H1 (cell line): ENCODE measurements at regions of chr6 and their contacts with region 1.

Region 1: DNA sequence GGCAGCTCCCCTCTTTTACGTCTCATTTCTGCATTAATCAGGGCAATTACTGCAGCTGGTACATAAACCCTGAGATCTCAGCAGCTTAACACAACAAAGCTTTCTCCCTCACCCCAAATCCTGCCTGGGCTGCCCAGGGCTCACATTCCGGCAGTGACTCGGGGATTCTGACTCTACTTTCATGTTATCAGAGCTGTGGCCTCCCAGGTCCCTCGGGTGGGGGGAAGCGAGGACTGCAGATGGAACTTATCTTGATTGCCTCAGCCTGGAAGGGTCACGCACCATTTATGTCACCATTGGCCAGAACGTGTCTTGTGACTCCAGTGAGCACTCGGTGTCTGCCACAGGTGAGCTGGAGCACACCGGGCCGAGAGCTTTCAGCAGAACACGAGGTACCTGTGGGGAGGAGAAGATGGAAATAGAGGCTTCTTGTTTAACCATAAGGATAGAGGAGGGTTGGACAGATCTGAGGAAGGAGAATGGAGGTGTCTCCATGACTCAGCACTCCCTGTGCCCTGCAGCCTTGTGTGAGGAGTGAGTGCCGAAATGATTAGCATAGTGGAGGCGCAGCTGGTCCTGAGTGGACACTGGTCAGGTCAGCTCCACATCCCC is 88.5 kb upstream of the EXOC2 start:
- DNase-seq: no peak
- H3K4me3 ChIP-seq: no peak overlapping the region
- H3K27ac ChIP-seq: no peak overlapping the region
- H3K4me1 ChIP-seq: no peaks in the 10 kb centered on the region
- H3K27me3 ChIP-seq: no peaks in the 10 kb centered on the region
- CTCF ChIP-seq: no peak
- EP300 ChIP-seq: no peak
- POLR2A ChIP-seq: no peak
- RAD21 ChIP-seq: no peak

Region 2: DNA sequence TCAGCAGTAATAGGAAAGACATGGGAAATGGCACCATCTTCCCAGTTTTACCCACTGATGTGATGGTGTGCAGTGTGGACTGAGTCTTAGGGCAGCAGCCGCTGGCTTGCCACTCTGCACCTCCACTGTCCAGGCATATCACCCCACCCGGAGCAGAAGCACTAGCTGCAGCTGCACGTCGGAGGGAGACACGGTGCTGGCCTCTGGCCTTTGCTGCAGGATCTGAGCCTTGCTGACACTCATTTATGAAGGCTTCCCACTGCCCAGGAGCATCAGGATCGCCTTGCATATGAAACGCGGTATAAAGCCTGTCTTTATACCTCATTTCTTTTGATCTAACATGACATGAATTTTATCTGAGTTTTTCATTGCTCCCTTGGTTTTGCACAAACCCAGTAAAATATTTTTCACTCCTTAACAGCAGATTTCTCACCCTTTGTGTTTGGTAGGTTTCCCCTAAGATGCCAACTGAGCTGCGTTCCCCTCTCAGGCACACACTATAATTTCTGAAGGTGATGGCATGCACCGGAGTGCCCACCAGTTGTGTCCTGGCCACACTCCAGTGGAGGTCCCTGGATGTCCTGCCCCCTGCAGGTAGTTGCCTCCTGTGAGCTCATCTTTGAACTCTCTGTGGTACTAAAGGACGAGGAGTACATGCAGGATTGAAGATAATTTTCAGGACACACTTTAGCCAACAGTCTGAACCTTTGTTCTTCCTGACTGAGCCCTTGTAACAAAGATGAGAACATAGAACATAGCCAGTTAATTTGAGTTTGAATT is 79.6 kb before region 1 on chr6:
- CTCF ChIA-PET with region 1: no interaction called
- POLR2A ChIA-PET with region 1: no interaction called
- DNase-seq: no peak
- H3K4me3 ChIP-seq: peak overlapping the region in 1 of 4 experiments; percentile 11; a peak in 1 of 8 replicates
- H3K27ac ChIP-seq: no peak overlapping the region
- H3K4me1 ChIP-seq: peaks cover 4 to 17% (median 13%) of the 10 kb centered on the region in 4 experiments
- H3K27me3 ChIP-seq: no peaks in the 10 kb centered on the region
- CTCF ChIP-seq: peak; percentile 34 to 51 (median 49)
- EP300 ChIP-seq: no peak
- POLR2A ChIP-seq: no peak
- RAD21 ChIP-seq: 0 out of 4 replicates have a peak, but pooled peaks of 1 of the 2 experiments have one; percentile 31

Region 3: GRCh38 chr6:733431-734219 is 47.8 kb before region 1 on chr6:
- CTCF ChIA-PET with region 1: no interaction called
- POLR2A ChIA-PET with region 1: no interaction called
- DNase-seq: no peak
- H3K4me3 ChIP-seq: no peak overlapping the region
- H3K27ac ChIP-seq: no peak overlapping the region
- H3K4me1 ChIP-seq: peaks cover 0 to 5% (median 1%) of the 10 kb centered on the region in 4 experiments; a peak in 4 of 7 replicates
- H3K27me3 ChIP-seq: no peaks in the 10 kb centered on the region
- CTCF ChIP-seq: no peak
- EP300 ChIP-seq: no peak
- POLR2A ChIP-seq: no peak
- RAD21 ChIP-seq: no peak

Region 4: DNA sequence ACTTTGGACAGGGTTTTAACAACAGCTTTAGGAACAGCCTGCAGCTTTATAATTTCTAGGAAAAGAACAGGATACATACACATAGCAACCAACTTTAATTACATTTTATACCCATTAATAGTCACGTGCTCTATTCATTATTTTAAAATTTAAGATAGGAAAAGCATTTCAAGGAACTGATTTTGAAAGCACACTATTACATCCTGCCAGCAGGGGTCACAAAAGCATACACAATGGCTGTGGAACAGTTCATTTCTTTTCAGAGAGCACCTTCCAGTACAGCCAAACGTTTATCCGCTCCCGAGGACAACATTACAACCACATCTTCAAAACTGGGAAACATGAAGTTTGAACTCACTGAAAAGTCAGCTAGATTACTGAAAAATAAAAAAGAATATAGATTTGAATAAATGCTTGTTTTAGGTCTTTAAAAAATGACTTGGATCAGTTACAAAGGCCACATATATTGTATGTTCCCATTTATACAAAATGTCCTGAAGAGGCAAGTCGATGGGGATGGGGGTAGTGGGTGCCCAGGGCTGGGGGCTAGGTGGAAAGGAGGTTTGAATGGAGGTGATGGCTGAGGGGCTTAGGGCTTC is 16.1 kb after region 1 on chr6:
- CTCF ChIA-PET with region 1: interaction called, 12 read pairs
- POLR2A ChIA-PET with region 1: no interaction called
- DNase-seq: peak in 1 of 2 experiments; percentile 53
- H3K4me3 ChIP-seq: no peak overlapping the region
- H3K27ac ChIP-seq: no peak overlapping the region
- H3K4me1 ChIP-seq: peaks cover 0 to 10% (median 7%) of the 10 kb centered on the region in 4 experiments; a peak in 4 of 7 replicates
- H3K27me3 ChIP-seq: no peaks in the 10 kb centered on the region
- CTCF ChIP-seq: peak in 2 of 3 experiments; percentile 43 to 54; a peak in 2 of 4 replicates
- EP300 ChIP-seq: no peak
- POLR2A ChIP-seq: no peak
- RAD21 ChIP-seq: peak; percentile 78 to 83

Region 5: GRCh38 chr6:946546-946945 is 165.1 kb after region 1 on chr6:
- CTCF ChIA-PET with region 1: no interaction called
- POLR2A ChIA-PET with region 1: no interaction called
- DNase-seq: no peak
- H3K4me3 ChIP-seq: no peak overlapping the region
- H3K27ac ChIP-seq: no peak overlapping the region
- H3K4me1 ChIP-seq: no peaks in the 10 kb centered on the region
- H3K27me3 ChIP-seq: 0 out of 7 replicates have a peak, but pooled peaks cover 0 to 2% (median 0%) of the 10 kb centered on the region in 4 experiments
- CTCF ChIP-seq: no peak
- EP300 ChIP-seq: no peak
- POLR2A ChIP-seq: no peak
- RAD21 ChIP-seq: no peak